ENCODE measurements at regions of chr4 and their contacts with region 1.

Region 1: GRCh38 chr4:182931691-182932345 is 14.6 kb upstream of the DCTD start:
- DNase-seq: no peak
- H3K4me3 ChIP-seq: no peak overlapping the region
- H3K27ac ChIP-seq: no peak overlapping the region
- H3K27me3 ChIP-seq: peaks cover 0 to 7% (median 0%) of the 10 kb centered on the region in 45 donors
- CTCF ChIP-seq: no peak

Region 2: GRCh38 chr4:182975806-182976205 is 44.0 kb after region 1 on chr4:
- intact Hi-C with region 1: no loop called
- DNase-seq: no peak
- H3K4me3 ChIP-seq: no peak overlapping the region
- H3K27ac ChIP-seq: no peak overlapping the region
- H3K27me3 ChIP-seq: peaks cover 0 to 3% (median 0%) of the 10 kb centered on the region in 45 donors
- CTCF ChIP-seq: no peak

Region 3: DNA sequence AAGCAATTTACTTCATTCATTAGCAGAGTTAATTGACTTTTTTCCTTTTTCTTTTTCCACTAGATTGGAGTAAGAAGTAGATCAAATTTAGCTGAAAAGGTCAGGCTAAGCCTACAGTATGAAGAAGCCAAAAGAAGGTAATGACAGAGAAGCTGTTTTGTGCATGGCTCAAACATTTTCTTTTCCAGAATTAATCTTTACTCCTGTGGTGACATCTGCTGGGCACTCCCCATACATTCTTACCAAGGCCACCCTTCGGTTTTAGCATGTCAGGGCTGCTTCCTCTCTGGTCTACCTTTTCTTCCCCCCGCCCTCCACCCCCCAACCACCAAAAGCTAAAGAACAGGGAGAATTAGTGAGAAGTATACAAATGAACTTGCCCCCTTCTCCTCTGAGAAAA is 318.0 kb after region 1 on chr4:
- intact Hi-C with region 1: loop called in 1 of 2 experiments (anchors 5 kb)
- DNase-seq: no peak
- H3K4me3 ChIP-seq: no peak overlapping the region
- H3K27ac ChIP-seq: no peak overlapping the region
- H3K27me3 ChIP-seq: no peaks in the 10 kb centered on the region
- CTCF ChIP-seq: peak in 54 of 56 donors; percentile 35 to 76 (median 56)